ENCODE measurements at regions of chr21 and their contacts with region 1.

Region 1: DNA sequence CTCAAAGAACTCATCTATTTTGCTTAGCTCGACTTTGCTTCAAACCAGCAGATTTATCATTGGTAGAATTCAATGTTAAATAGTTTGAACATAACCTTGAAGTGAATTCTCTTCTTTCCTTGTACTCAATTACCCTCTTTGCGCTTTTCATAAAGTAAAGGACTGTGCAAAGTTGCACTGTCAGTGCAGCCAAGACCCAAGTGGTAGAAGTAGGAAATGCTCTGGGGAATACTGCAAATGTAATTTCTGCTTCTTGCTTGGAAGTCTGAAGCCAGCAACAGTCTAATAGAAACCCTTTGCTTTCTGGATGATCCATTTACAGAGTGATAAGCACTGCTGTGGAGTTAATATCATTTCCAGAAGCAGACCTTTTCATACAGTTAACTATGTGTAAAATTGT is 936.7 kb upstream of the TMPRSS15 start:
- DNase-seq: no peak
- ATAC-seq: no peak
- H3K4me3 ChIP-seq: no peak overlapping the region
- H3K4me3 Mint-ChIP-seq: no peak overlapping the region
- H3K27ac ChIP-seq: no peak overlapping the region
- H3K27ac Mint-ChIP-seq: no peak overlapping the region
- H3K4me1 ChIP-seq: no peaks in the 10 kb centered on the region
- H3K4me1 Mint-ChIP-seq: no peaks in the 10 kb centered on the region
- H3K27me3 ChIP-seq: no peaks in the 10 kb centered on the region
- H3K27me3 Mint-ChIP-seq: no peaks in the 10 kb centered on the region

Region 2: GRCh38 chr21:19368944-19369343 is 28.6 kb after region 1 on chr21:
- CTCF ChIA-PET with region 1: no interaction called
- POLR2A ChIA-PET with region 1: no interaction called
- intact Hi-C with region 1: loop called in 1 of 2 experiments (anchors 1 kb)
- DNase-seq: no peak
- ATAC-seq: no peak
- H3K4me3 ChIP-seq: no peak overlapping the region
- H3K4me3 Mint-ChIP-seq: no peak overlapping the region
- H3K27ac ChIP-seq: no peak overlapping the region
- H3K27ac Mint-ChIP-seq: no peak overlapping the region
- H3K4me1 ChIP-seq: no peaks in the 10 kb centered on the region
- H3K4me1 Mint-ChIP-seq: peaks cover 0 to 2% (median 0%) of the 10 kb centered on the region in 7 donors
- H3K27me3 ChIP-seq: no peaks in the 10 kb centered on the region
- H3K27me3 Mint-ChIP-seq: no peaks in the 10 kb centered on the region

Measured in naive thymus-derived CD4-positive, alpha-beta T cell (primary cell).